ENCODE measurements at regions of chr16 and their contacts with region 1.

Region 1: DNA sequence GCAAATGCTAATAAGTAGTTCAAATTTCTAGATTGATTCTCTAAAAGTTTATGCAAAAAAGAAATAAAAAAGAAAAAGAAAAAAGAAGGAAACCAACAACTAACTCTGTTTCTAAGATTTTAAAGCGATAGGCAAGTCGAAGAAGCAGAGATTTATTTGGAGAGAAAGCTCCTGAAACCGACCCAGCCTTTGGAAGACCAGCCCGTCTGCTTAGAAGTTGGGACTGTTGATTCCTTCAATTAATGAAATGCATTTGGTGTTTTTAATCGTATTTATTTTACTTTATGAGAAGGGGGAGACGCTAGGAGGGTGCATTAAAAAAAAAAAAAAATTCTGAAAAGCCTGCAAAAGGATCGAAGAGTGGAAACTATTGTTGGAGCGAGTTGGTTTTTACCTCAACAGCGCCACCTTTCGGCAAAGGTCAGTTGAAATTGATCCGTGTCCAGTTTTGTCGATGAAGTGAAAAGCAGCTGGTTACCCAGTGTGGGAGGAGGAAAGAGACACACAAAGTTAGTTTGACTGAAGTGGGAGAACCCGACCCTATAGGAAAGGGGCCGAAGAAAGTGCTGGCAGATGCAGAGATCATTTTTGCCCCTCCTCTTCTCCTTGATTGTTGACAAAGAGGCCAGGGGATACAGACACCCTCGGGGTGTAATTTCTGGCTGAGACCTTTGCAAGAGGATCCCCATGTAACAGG is 1.5 kb upstream of the MAF start:
- DNase-seq: peak; percentile 88 to 89
- ATAC-seq: peak; percentile 60
- H3K4me3 ChIP-seq: peak overlapping the region; percentile 85 to 89
- H3K27ac ChIP-seq: no peak overlapping the region
- H3K4me1 ChIP-seq: no peaks in the 10 kb centered on the region
- H3K27me3 ChIP-seq: no peaks in the 10 kb centered on the region

Region 2: GRCh38 chr16:78122774-78123315 is 1479.2 kb before region 1 on chr16:
- intact Hi-C with region 1: loop called in 1 of 2 experiments (anchors 10 kb)
- DNase-seq: no peak
- ATAC-seq: peak; percentile 84
- H3K4me3 ChIP-seq: peak overlapping the region in 1 of 2 donors; percentile 26
- H3K27ac ChIP-seq: no peak overlapping the region
- H3K4me1 ChIP-seq: peaks cover 0 to 3% of the 10 kb centered on the region in 2 donors
- H3K27me3 ChIP-seq: no peaks in the 10 kb centered on the region

Region 3: DNA sequence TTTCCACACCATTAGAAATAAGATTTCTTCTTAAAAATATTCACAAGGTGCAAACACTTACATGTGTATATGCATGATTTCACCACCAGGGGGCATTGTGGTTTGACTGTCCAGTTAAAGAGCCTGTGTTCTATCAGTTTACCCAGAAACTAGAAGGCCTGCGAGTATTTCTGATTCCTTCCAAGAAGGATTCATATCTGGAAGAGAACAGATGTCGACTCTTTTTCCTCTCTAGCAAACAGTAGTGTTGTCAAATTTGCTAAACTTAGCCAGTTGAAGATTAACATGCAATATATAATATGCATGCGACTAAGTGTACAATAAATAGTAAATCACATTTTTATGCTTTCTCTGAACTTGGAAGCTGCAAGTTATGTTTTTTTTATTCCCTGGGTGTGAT is 1098.5 kb before region 1 on chr16:
- intact Hi-C with region 1: loop called (anchors 10 kb)
- DNase-seq: no peak
- ATAC-seq: no peak
- H3K4me3 ChIP-seq: no peak overlapping the region
- H3K27ac ChIP-seq: no peak overlapping the region
- H3K4me1 ChIP-seq: peaks cover 2 to 4% of the 10 kb centered on the region in 2 donors
- H3K27me3 ChIP-seq: no peaks in the 10 kb centered on the region

Region 4: GRCh38 chr16:79662669-79663313 is 60.7 kb after region 1 on chr16:
- intact Hi-C with region 1: loop called in 1 of 2 experiments (anchors 1 kb)
- DNase-seq: no peak
- ATAC-seq: no peak
- H3K4me3 ChIP-seq: no peak overlapping the region
- H3K27ac ChIP-seq: no peak overlapping the region
- H3K4me1 ChIP-seq: no peaks in the 10 kb centered on the region
- H3K27me3 ChIP-seq: no peaks in the 10 kb centered on the region

Region 5: DNA sequence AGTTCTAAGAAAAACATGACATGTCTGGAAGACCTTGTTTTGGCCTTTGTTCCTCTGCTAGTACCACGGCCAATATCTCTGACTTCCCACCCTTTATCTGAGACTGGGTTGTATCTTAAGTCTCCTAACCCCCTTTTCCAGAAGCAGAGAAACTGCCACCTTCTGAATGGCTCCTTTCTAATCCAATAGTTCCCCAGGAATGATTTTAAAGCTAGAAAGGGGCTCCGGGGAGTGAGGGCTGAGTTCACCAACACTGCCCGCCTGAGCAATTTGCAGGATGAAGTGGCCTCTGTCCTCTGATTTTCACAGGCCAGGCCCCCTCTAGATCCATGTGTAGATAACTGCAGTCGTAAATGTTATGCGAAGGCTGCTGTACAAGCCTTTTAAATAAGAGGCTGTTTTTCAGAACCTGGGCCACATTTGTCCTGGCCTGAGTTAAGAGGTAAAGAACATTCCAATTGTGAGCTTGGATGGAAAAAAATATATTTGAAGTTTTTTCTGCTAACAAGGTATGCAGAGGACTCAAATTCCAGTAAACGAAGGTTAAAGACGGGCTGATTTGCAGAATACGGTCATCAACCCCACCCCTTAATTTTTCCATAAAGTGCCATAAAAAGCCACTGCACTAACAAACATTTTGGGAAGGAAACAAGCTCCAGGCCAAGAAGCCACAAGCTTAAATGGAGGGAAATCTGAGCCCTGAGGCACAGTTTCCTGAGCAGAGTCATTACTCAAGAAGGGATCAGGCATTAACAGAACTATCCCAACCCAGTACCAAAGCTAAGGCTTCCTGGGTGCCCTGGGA is 115.5 kb after region 1 on chr16:
- intact Hi-C with region 1: loop called (anchors 2 to 5 kb)
- DNase-seq: no peak
- ATAC-seq: peak; percentile 13
- H3K4me3 ChIP-seq: no peak overlapping the region
- H3K27ac ChIP-seq: peak overlapping the region; percentile 94 to 97
- H3K4me1 ChIP-seq: peaks cover 7 to 21% of the 10 kb centered on the region in 2 donors
- H3K27me3 ChIP-seq: no peaks in the 10 kb centered on the region

Region 6: GRCh38 chr16:79770244-79771064 is 168.4 kb after region 1 on chr16:
- intact Hi-C with region 1: loop called (anchors 2 to 5 kb)
- DNase-seq: peak; percentile 95
- ATAC-seq: peak; percentile 97
- H3K4me3 ChIP-seq: peak overlapping the region; percentile 53 to 68
- H3K27ac ChIP-seq: peak overlapping the region in 1 of 2 donors; percentile 29
- H3K4me1 ChIP-seq: peaks cover 0 to 8% of the 10 kb centered on the region in 2 donors
- H3K27me3 ChIP-seq: no peaks in the 10 kb centered on the region

Region 7: GRCh38 chr16:80084685-80085084 is 482.6 kb after region 1 on chr16:
- intact Hi-C with region 1: loop called in 1 of 2 experiments (anchors 10 kb)
- DNase-seq: peak in 1 of 2 donors; percentile 53
- ATAC-seq: peak; percentile 92
- H3K4me3 ChIP-seq: no peak overlapping the region
- H3K27ac ChIP-seq: no peak overlapping the region
- H3K4me1 ChIP-seq: no peaks in the 10 kb centered on the region
- H3K27me3 ChIP-seq: no peaks in the 10 kb centered on the region

Measured in aorta (tissue), 5 donors.